ENCODE measurements at regions of chr4 and their contacts with region 1.

Region 1: DNA sequence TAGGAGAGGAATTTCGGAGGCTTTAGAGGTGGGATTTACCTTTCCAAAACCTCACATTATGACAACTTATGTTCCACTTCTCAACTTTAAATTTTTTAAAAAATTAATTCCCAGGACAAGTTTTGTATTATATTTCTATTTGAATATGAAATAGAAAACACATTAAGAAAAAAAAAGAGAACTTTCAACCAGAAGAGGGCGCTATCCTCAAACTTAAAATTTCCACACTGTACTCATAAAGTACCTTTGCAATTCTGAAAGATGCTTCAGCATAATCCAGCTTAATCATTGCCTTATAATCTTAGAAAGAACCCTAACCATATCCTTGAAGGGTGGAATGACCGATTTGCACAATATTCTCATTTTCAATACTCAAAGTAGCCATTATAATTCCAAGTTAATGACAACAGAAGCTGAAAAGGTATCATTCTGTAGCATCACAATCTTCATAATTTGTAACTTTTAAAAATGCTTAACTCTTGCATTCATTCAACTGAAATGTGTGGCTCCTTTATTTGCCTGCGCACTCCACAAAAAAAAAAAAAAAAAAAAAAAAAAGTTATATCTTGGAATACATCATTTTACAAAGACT is 158.0 kb downstream of the KCNIP4 start:
- DNase-seq: no peak

Region 2: GRCh38 chr4:22389240-22389870 is 598.8 kb after region 1 on chr4:
- intact Hi-C with region 1: loop called (anchors 2 kb)
- DNase-seq: no peak

Region 3: GRCh38 chr4:22688236-22688635 is 897.7 kb after region 1 on chr4:
- intact Hi-C with region 1: loop called (anchors 2 kb)
- DNase-seq: no peak